ENCODE measurements at regions of chr15 and their contacts with region 1.

Region 1: GRCh38 chr15:82540055-82540983 is at the start of gene RPS17:
- DNase-seq: peak; percentile 95
- H3K4me3 Mint-ChIP-seq: peak within 1 kb of the TSS; percentile 92
- H3K27ac Mint-ChIP-seq: peak within 1 kb of the TSS; percentile 81
- H3K4me1 Mint-ChIP-seq: peaks cover 30% of the 10 kb centered on the region
- H3K27me3 Mint-ChIP-seq: no peaks in the 10 kb centered on the region
- CTCF ChIP-seq: peak; percentile 99
- total RNA-seq, gene RPS17: 2,707 and 3,065 TPM in 2 replicates

Region 2: DNA sequence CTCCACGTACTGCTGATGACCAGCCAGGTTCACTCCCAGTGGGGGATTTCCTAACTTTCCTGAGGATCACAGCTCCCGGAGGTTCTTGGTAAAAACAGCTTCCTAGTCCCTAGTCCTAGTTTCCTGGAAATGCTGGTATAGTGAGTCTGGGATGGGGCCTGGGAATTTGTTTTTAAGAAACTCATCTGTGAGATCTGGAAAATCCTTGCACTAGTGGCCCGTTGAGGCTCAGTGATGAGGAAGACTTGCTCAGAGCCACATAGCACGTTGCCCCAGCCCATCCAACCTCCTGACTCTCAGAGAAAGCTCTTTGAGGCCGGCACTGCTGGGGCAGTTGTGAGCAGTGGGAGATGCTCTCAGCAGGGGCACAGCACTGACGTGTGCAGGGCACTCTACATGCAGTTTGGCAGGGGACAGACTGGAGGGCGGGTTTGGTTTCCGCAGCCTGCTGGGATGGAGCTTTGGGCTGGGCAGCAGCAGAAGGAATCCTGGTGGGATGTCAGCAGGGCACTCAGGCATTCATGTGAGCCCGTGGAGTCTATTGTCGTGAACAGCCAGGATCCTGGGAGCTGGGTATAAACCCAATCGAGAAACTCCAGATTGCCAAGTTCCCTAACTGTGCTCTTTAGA is 246.1 kb before region 1 on chr15:
- CTCF ChIA-PET with region 1: no interaction called
- POLR2A ChIA-PET with region 1: no interaction called
- intact Hi-C with region 1: no loop called
- DNase-seq: no peak
- H3K4me3 Mint-ChIP-seq: no peak overlapping the region
- H3K27ac Mint-ChIP-seq: no peak overlapping the region
- H3K4me1 Mint-ChIP-seq: no peaks in the 10 kb centered on the region
- H3K27me3 Mint-ChIP-seq: no peaks in the 10 kb centered on the region
- CTCF ChIP-seq: no peak

Region 3: DNA sequence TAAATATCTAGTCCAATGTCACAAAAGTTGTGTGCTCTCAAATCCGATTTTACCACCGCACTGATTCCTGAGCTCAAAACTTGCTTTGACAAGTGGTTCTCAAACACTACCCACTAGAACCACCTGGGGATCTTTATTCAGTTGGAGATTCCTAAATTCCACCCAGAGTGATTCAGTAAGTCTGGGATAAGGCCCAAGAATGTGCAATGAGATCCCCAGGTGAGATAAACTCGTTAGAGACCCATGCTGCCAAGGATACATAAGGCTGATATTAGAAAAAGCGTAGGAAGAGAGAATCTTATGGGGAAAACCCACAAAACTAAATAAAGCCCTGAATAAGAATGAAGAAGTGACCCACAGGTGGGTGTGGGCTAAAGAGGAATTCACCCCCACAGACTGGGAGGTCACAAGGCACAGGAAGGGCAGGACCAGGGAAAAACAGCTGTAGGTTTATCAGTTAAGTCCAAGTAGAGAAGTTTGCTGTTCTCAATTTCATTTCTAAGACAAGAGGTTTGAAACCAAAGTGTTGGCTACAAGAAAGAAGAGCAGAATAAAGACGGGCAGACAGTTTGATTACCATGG is 11.4 kb after region 1 on chr15:
- CTCF ChIA-PET with region 1: interaction called, 11 read pairs
- POLR2A ChIA-PET with region 1: interaction called, 25 read pairs
- intact Hi-C with region 1: no loop called
- DNase-seq: peak; percentile 39
- H3K4me3 Mint-ChIP-seq: no peak overlapping the region
- H3K27ac Mint-ChIP-seq: no peak overlapping the region
- H3K4me1 Mint-ChIP-seq: peaks cover 21% of the 10 kb centered on the region
- H3K27me3 Mint-ChIP-seq: no peaks in the 10 kb centered on the region
- CTCF ChIP-seq: no peak

Region 4: DNA sequence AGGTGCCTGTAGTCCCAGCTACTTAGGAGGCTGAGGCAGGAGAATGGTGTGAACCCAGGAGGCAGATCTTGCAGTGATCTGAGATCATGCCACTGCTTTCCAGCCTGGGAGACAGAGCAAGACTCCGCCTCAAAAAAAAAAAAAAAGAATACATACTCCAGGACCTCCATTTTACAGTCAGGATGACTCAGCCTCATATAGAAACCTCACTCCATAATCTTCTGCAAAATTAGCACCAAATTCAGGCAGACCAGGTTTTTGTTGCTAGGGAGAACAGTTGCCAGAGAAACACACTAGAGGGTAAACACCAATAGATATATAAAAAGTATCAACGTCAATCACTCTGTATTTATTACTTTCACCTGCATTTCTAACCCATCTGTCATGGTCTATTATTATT is 197.7 kb after region 1 on chr15:
- CTCF ChIA-PET with region 1: no interaction called
- POLR2A ChIA-PET with region 1: interaction called, 52 read pairs
- intact Hi-C with region 1: no loop called
- DNase-seq: no peak
- H3K4me3 Mint-ChIP-seq: no peak overlapping the region
- H3K27ac Mint-ChIP-seq: no peak overlapping the region
- H3K4me1 Mint-ChIP-seq: peaks cover 13% of the 10 kb centered on the region
- H3K27me3 Mint-ChIP-seq: no peaks in the 10 kb centered on the region
- CTCF ChIP-seq: no peak

Region 5: GRCh38 chr15:82832601-82833361 is 292.5 kb after region 1 on chr15:
- CTCF ChIA-PET with region 1: no interaction called
- POLR2A ChIA-PET with region 1: interaction called, 10 read pairs
- intact Hi-C with region 1: no loop called
- DNase-seq: peak; percentile 76
- H3K4me3 Mint-ChIP-seq: no peak overlapping the region
- H3K27ac Mint-ChIP-seq: peak overlapping the region; percentile 75
- H3K4me1 Mint-ChIP-seq: peaks cover 16% of the 10 kb centered on the region
- H3K27me3 Mint-ChIP-seq: no peaks in the 10 kb centered on the region
- CTCF ChIP-seq: no peak

Measured in MCF 10A (cell line).